Left cardiac atrium (tissue), 4 donors: ENCODE measurements at regions of chr11 and their contacts with region 1.

Region 1: DNA sequence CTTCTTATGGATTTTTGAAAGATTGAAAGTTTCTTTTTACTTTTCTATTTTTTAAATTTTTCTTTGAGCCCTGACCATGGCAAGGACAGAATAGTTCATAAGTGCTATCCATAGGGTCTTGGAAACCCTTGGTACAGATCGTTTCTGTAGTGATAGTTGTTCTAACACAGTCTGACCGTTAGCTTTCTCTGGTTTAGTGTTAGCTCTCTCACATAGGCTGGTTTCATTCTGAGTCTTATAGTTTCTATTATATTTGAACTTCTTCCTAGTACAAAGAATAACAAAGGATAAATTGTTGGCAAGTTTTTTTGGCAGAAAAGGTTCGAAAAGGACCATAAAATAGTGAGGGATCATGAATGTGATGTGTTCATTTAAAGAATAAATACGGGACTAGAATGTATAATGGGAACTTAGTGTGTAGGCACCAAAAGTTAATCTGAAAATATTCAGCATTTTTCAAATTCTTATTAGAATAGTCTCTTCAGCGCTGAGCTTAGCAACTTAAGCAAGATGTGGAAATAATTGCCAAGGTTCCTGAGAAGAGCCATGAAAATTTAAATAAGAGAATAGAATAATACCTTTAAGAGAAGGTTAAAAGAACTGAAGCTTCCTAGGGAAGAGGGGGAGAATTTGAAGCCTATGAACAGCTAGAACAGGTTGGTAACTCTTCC is 24.1 kb downstream of the FDX1 start:
- DNase-seq: no peak
- ATAC-seq: no peak

Region 2: GRCh38 chr11:109870297-109870696 is 583.5 kb before region 1 on chr11:
- intact Hi-C with region 1: no loop called
- DNase-seq: no peak
- ATAC-seq: no peak

Region 3: GRCh38 chr11:111230122-111230465 is 776.3 kb after region 1 on chr11:
- intact Hi-C with region 1: loop called in 1 of 2 experiments (anchors 10 kb)
- DNase-seq: no peak
- ATAC-seq: peak; percentile 49 to 53